Dendritic cell treated with granulocyte-macrophage colony-stimulating factor and Interleukin-4, amounts not matched to agents 40 ng/mL and 50 ng/mL, for 4 days (primary cell): ENCODE measurements at regions of chr19 and their contacts with region 1.

Region 1: DNA sequence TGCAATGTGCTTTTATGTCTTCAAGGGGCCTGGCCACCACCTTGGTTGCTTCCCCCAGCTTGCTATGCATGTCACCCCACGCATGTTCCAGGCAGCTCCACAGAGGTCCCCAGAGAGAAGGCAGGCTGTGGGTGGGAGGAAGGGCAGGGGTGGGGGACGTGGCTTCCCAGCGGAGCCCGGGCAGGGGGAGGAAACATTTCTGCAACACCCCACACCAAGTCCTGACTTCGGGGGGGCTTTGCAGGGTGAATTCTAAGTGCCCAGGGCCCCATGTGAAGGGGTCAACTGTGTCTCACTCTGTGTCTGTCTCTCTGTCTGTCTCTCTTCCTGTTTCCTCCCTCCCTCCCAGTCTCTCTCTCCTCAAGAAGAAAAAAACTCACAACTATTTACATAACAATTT is 39.6 kb downstream of the LTBP4 start:
- H3K4me3 Mint-ChIP-seq: no peak overlapping the region
- H3K27ac Mint-ChIP-seq: no peak overlapping the region
- H3K4me1 Mint-ChIP-seq: peaks cover 10% of the 10 kb centered on the region
- H3K27me3 Mint-ChIP-seq: peaks cover 13% of the 10 kb centered on the region

Region 2: GRCh38 chr19:40603389-40604135 is 37.2 kb before region 1 on chr19:
- intact Hi-C with region 1: loop called (anchors 2 kb)
- H3K4me3 Mint-ChIP-seq: peak overlapping the region; percentile 82
- H3K27ac Mint-ChIP-seq: peak overlapping the region; percentile 49
- H3K4me1 Mint-ChIP-seq: peaks cover 83% of the 10 kb centered on the region
- H3K27me3 Mint-ChIP-seq: peaks cover 95% of the 10 kb centered on the region